PC-9 (cell line): ENCODE measurements at regions of chr11 and their contacts with region 1.

Region 1: DNA sequence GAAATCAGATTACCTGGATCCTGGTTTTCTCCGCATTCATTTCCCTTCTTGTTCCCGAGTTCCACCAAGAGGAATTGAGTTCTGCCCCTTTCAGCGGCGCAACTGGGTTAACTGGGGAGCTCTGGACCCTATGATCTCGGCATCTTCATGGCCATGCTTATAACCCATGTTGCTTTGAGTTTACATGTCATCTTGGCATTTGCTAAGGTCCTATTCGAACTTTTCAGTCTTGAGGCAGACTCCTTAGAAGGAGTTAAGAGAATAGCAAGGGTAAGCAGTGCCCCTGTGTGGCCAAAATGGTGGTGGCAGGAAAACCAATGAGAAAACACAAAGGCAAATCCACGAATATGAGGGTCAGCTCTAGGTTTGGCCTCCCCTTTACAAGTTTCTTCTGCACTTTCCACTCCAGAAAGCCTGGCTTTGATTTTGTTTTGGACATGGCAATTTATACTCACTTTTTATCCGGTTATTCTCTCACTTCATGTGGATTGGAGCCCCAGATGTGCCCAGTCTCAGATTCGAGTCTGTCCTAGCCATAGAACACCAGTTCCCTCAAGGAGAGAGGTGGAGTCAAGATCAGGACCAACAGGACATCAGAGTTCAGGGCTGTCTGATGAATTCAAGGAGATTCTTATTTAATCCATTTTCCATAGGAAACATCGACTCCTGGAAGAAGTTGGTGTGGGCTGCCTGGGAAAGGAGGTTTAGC is 55.3 kb upstream of the FBXO3 start:
- DNase-seq: peak; percentile 62 to 70
- H3K4me3 ChIP-seq: peak overlapping the region; percentile 54
- H3K27ac ChIP-seq: no peak overlapping the region
- H3K4me1 ChIP-seq: peaks cover 18% of the 10 kb centered on the region
- H3K27me3 ChIP-seq: no peaks in the 10 kb centered on the region
- CTCF ChIP-seq: peak; percentile 88

Region 2: GRCh38 chr11:32713496-32713895 is 1116.1 kb before region 1 on chr11:
- CTCF ChIA-PET with region 1: no interaction called
- POLR2A ChIA-PET with region 1: no interaction called
- intact Hi-C with region 1: loop called (anchors 2 kb)
- DNase-seq: peak in 1 of 2 experiments; percentile 11
- H3K4me3 ChIP-seq: no peak overlapping the region
- H3K27ac ChIP-seq: no peak overlapping the region
- H3K4me1 ChIP-seq: peaks cover 4% of the 10 kb centered on the region
- H3K27me3 ChIP-seq: no peaks in the 10 kb centered on the region
- CTCF ChIP-seq: peak; percentile 80

Region 3: DNA sequence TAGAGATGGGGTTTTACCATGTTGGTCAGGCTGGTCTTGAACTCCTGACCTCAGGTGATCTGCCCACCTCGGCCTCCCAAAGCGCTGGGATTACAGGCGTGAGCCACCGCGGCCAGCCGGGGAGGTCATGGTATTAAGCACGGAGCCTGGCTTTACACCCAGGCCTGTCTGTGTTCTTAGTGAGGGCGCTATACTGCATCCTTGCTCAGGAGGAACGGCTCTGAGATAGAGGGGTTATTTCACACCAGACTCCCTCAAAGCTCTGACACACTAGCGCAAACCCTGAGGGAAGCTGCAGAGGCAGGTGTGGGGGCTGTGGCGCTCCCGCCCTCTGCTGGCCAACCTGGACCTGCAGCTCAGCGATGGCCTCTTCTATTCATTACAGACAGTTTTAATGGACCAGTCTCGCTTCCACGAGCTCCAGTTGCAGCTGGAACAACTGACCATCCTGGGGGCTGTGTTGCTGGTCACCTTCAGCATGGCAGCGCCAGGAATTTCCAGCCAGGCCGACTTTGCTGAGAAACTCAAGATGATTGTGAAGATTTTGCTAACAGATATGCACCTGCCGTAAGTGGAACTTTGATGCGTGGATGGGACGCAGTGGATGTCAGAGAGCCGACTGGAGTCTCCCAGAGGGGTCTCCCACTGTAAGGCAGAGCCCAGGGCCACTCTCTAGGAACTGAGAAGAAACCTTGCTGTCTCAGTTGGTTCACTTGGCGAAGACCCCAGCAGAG is 764.0 kb before region 1 on chr11:
- CTCF ChIA-PET with region 1: no interaction called
- POLR2A ChIA-PET with region 1: no interaction called
- intact Hi-C with region 1: loop called (anchors 5 kb)
- DNase-seq: peak in 1 of 2 experiments; percentile 54
- H3K4me3 ChIP-seq: no peak overlapping the region
- H3K27ac ChIP-seq: no peak overlapping the region
- H3K4me1 ChIP-seq: no peaks in the 10 kb centered on the region
- H3K27me3 ChIP-seq: no peaks in the 10 kb centered on the region
- CTCF ChIP-seq: peak; percentile 90

Region 4: DNA sequence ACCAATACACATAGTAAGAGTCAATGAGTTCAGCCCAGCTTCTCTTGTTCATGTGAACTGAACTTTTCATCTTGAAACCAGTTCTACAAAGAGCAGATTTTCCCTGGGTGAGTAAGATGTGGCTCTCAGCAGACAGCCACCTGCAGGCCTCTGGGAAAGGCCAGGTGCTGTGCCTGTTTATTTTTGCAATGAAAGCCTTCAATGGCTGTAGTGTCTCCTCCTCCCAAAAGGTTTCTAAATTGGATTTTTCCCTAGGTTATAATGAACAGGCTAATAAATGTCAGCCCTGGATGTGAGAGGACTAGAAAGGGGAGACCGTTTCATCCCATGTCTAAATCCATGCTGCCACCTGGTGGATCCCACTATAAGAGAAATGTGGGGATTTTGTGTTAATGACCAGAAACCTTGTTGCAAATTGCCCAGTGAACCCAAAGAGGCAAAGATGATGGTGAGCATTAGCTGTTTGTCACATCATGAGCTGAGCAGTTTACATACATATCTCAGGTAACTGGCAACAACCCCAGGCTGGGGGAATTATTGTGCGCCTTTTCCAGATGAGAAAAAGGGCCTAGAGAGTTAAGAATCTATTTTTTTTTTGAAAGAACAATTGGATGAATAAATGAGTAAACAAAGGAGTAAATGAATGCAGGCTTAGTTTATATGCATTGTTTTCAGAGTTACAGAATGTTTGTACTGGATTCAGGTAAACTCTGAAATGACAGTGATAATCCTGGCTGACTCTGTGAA is 141.7 kb before region 1 on chr11:
- CTCF ChIA-PET with region 1: no interaction called
- POLR2A ChIA-PET with region 1: no interaction called
- intact Hi-C with region 1: loop called (anchors 2 kb)
- DNase-seq: peak; percentile 61 to 87
- H3K4me3 ChIP-seq: no peak overlapping the region
- H3K27ac ChIP-seq: peak overlapping the region; percentile 99
- H3K4me1 ChIP-seq: peaks cover 56% of the 10 kb centered on the region
- H3K27me3 ChIP-seq: no peaks in the 10 kb centered on the region
- CTCF ChIP-seq: peak; percentile 97

Region 5: DNA sequence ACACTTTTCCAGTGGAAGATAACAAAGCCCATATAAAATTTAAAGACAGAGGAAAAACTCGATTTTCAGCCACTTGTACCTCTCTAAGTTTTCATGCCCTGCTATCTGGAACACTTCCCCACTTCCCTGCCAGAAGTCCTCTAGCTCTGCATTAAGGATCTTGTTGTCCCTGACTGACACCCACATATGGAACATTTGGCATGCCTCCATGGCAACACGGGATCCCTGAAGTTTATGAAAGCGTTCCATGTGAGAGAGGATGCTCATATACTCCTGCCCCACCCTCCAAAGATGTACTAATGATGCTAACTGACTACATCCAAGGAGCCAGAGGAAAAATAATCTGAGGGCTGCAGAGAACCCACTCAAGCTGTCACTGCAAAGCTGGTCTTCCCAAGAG is 120.1 kb before region 1 on chr11:
- CTCF ChIA-PET with region 1: no interaction called
- POLR2A ChIA-PET with region 1: no interaction called
- intact Hi-C with region 1: no loop called
- DNase-seq: peak in 1 of 2 experiments; percentile 28
- H3K4me3 ChIP-seq: no peak overlapping the region
- H3K27ac ChIP-seq: peak overlapping the region; percentile 53
- H3K4me1 ChIP-seq: peaks cover 48% of the 10 kb centered on the region
- H3K27me3 ChIP-seq: no peaks in the 10 kb centered on the region
- CTCF ChIP-seq: no peak

Region 6: DNA sequence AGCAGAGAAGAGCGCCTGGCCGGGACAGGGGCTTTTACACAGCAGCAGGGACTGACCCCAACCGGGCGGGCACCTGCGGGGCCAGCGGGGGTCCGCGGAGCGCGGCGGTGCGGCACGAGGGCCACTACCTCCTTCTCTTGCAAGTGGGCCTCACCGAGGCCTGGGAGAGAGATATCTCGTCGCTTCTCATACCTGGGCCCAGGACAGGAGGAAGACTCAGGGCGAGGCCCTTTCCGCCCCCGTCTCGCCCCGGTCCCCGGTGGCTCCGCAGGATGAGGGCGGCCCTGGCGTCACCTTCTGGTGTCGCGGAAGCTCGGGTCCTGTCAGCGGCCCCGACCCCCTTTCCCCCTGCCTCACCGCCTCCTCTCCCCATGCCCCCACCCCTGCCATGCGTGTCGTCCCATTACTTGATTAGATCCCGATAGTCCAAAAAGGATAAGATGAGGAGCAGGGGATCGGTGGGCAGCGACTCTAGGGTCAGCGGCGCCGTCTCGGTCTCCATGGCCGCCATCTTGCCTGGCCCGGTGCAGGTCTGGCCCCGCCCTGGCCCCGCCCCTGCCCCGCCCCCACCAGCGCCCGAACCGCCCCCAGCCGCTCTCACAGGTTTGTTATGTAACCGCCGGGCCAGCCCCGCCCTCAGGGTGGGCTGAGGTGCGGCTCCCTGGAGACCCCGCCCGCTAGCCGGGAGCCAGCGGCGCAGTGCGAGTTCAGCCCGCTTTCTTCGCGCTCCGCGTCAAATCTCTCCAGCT is 55.4 kb before region 1 on chr11 and contains the start of gene FBXO3:
- CTCF ChIA-PET with region 1: no interaction called
- POLR2A ChIA-PET with region 1: no interaction called
- intact Hi-C with region 1: no loop called
- DNase-seq: peak; percentile 75 to 92
- H3K4me3 ChIP-seq: peak within 1 kb of the TSS; percentile 96
- H3K27ac ChIP-seq: peak within 1 kb of the TSS; percentile 38
- H3K4me1 ChIP-seq: peaks cover 50% of the 10 kb centered on the region
- H3K27me3 ChIP-seq: no peaks in the 10 kb centered on the region
- CTCF ChIP-seq: no peak
- total RNA-seq, gene FBXO3: 28.3 and 32.9 TPM in 2 replicates

Region 7: GRCh38 chr11:34028425-34028824 is 198.8 kb after region 1 on chr11:
- CTCF ChIA-PET with region 1: no interaction called
- POLR2A ChIA-PET with region 1: interaction called, 20 read pairs
- intact Hi-C with region 1: no loop called
- DNase-seq: no peak
- H3K4me3 ChIP-seq: no peak overlapping the region
- H3K27ac ChIP-seq: no peak overlapping the region
- H3K4me1 ChIP-seq: no peaks in the 10 kb centered on the region
- H3K27me3 ChIP-seq: no peaks in the 10 kb centered on the region
- CTCF ChIP-seq: no peak